Breast epithelium (tissue), 4 donors: ENCODE measurements at regions of chr7 and their contacts with region 1.

Region 1: DNA sequence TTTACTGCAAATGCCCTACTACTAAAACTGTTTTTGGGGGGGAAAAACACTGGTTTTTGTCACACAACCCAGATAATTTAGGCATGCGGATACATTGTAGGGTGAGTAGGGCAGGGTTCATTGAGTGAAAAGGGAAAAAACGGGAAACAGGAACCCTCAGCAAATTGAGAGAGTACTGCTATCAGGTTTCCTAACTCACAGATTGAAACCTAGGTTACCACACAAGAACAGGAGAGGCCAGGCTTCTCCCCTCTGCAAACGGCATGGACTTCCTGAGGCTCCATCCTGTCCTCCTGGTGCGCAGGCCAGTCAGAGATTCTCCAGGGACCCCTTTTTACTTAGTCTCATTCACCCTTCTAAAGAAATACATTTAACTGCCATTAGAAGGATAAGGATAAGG is 30.6 kb downstream of the AVL9 start:
- DNase-seq: no peak
- H3K4me3 ChIP-seq: no peak overlapping the region
- H3K27ac ChIP-seq: no peak overlapping the region
- H3K4me1 ChIP-seq: no peaks in the 10 kb centered on the region
- H3K27me3 ChIP-seq: no peaks in the 10 kb centered on the region
- CTCF ChIP-seq: no peak
- POLR2A ChIP-seq: no peak

Region 2: DNA sequence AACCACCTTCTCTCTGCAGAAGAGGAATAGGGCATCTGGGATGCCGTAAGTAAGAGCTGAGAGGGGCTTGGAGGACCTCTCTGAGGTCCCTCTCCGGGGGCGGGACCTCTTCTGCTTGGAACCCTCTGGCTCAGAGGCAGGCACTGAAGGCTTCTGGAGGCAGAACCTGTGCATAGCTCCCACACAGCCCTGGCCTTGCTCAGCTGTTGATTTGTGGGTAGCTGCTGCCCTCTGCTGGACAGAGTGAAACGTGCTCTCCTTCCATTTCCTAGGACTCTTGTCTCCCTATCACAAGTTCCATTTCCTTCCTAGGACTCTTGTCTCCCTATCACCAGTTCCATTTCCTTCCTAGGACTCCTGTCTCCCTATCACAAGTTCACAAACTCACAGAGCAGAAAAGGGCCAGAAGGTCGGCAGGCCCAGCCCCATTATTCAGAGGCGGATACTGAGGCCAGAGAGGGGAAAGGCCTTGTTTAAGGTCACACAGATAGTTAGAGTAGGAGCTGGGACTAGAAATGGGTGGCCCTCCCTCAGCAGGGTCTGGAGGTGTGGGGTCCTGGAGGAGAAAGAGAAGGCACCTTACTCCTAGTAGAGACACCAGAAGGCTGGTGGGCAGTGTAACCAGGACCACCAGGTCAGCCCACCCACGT is 1961.5 kb before region 1 on chr7:
- intact Hi-C with region 1: no loop called
- DNase-seq: peak; percentile 79 to 83
- H3K4me3 ChIP-seq: no peak overlapping the region
- H3K27ac ChIP-seq: peak overlapping the region; percentile 86 to 87
- H3K4me1 ChIP-seq: peaks cover 0 to 17% of the 10 kb centered on the region in 2 donors
- H3K27me3 ChIP-seq: no peaks in the 10 kb centered on the region
- CTCF ChIP-seq: peak; percentile 71 to 93 (median 89)
- POLR2A ChIP-seq: no peak

Region 3: GRCh38 chr7:32470871-32471270 is 55.0 kb before region 1 on chr7:
- intact Hi-C with region 1: no loop called
- DNase-seq: no peak
- H3K4me3 ChIP-seq: no peak overlapping the region
- H3K27ac ChIP-seq: no peak overlapping the region
- H3K4me1 ChIP-seq: no peaks in the 10 kb centered on the region
- H3K27me3 ChIP-seq: no peaks in the 10 kb centered on the region
- CTCF ChIP-seq: no peak
- POLR2A ChIP-seq: no peak

Region 4: GRCh38 chr7:32577421-32577820 is 51.6 kb after region 1 on chr7:
- intact Hi-C with region 1: loop called (anchors 2 kb)
- DNase-seq: no peak
- H3K4me3 ChIP-seq: no peak overlapping the region
- H3K27ac ChIP-seq: no peak overlapping the region
- H3K4me1 ChIP-seq: no peaks in the 10 kb centered on the region
- H3K27me3 ChIP-seq: no peaks in the 10 kb centered on the region
- CTCF ChIP-seq: no peak
- POLR2A ChIP-seq: no peak